ENCODE measurements at regions of chr2 and their contacts with region 1.

Region 1: DNA sequence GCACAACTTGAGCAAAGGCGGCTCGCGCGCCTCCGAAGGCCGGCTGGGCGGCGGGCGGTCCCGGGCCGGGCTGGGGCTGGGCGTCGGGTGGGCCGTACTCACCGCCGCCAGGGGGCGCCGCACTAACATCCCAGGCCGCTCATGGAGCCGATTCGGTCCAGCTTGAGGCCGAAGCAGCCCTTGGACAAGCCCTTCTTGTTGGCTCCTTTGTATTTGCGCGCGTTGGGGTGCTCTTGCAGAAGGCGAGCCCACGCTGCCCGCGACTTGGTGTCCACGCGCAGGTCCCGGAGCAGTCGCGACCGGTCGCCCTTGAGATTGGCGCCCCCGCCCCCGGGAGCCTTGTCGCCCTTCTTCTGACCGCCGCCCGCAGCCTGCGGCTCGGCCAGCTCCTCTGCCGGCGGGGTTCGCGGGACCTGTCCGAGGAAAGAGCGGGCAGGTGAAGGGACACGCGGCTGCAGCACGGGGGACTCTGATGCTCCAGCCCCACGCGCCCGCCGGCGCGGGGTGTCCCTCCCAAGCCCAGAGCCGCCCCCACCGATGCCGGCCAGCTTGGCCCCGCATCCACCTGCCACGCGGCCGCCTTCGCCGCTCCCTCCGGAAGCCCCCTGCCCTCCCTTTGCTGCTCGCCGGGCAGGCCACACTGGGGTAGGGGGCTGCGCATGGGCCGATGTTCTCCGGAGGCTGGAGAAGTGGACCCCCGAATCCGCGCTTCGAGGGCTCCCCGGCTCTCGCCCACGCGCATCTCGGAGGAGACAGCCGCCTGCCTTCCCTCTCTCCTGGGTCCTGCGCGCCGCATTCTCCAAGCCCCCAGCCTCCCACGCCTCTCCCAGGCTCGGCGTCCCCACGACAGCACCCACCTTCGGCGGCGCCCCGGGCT is 655 bp downstream of the NPPC start:
- DNase-seq: peak; percentile 60 to 88 (median 78)
- H3K4me3 ChIP-seq: peak overlapping the region; percentile 32 to 78 (median 64)
- H3K27ac ChIP-seq: peak overlapping the region in 2 of 59 donors; percentile 23 to 64
- H3K27me3 ChIP-seq: peaks cover 0 to 42% (median 16%) of the 10 kb centered on the region in 45 donors
- CTCF ChIP-seq: peak; percentile 62 to 98 (median 91)

Region 2: GRCh38 chr2:231452799-231453508 is 472.6 kb before region 1 on chr2:
- intact Hi-C with region 1: no loop called
- DNase-seq: peak in 1 of 10 donors; percentile 8
- H3K4me3 ChIP-seq: no peak overlapping the region
- H3K27ac ChIP-seq: peak overlapping the region in 30 of 59 donors; percentile 4 to 74 (median 41)
- H3K27me3 ChIP-seq: no peaks in the 10 kb centered on the region
- CTCF ChIP-seq: no peak

Region 3: DNA sequence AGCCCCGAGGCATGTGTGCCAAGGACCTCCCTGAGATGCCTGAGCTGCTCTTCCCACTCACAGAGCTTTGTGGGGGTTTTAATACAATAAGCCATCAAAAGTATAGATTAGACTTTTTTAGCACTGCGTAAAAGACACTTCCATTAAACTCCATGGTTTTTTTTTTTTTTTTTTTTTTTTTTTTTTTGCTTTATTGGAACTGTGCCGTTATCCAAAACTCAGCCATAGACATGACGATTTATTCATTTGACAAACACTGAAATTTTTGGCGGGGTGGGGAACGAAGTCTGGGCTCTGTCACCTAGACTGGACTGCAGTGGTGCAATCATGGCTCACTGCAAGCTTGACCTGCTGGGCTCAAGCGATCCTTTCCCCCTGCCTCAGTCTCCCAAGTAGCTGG is 17.8 kb before region 1 on chr2:
- intact Hi-C with region 1: loop called in 1 of 2 experiments (anchors 2 kb)
- DNase-seq: no peak
- H3K4me3 ChIP-seq: no peak overlapping the region
- H3K27ac ChIP-seq: no peak overlapping the region
- H3K27me3 ChIP-seq: no peaks in the 10 kb centered on the region
- CTCF ChIP-seq: no peak

Region 4: DNA sequence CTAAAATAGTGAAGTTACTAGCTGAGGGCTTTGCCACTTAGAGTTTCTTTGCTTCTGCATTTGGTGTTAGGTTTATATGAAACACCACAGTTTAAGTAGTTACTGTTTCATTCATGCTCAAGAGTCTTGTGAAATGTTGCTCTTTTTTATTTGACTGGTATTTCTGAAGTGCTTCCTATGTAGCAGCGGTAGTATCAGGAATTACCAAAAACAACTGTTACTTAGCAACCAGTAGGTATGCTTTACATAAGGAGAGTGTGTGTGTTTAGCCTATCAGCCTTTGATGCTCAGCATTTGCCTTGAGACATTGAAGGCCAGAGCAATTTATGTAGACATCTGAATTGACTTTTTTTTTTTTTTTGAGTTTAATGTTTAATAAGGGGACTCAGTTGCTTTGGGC is 39.6 kb after region 1 on chr2:
- intact Hi-C with region 1: no loop called
- DNase-seq: no peak
- H3K4me3 ChIP-seq: no peak overlapping the region
- H3K27ac ChIP-seq: no peak overlapping the region
- H3K27me3 ChIP-seq: no peaks in the 10 kb centered on the region
- CTCF ChIP-seq: no peak

Region 5: GRCh38 chr2:232142049-232142448 is 216.5 kb after region 1 on chr2:
- intact Hi-C with region 1: loop called (anchors 1 to 5 kb)
- DNase-seq: peak in 5 of 10 donors; percentile 14 to 59 (median 39)
- H3K4me3 ChIP-seq: no peak overlapping the region
- H3K27ac ChIP-seq: no peak overlapping the region
- H3K27me3 ChIP-seq: no peaks in the 10 kb centered on the region
- CTCF ChIP-seq: peak in 55 of 56 donors; percentile 53 to 92 (median 74)

Region 6: DNA sequence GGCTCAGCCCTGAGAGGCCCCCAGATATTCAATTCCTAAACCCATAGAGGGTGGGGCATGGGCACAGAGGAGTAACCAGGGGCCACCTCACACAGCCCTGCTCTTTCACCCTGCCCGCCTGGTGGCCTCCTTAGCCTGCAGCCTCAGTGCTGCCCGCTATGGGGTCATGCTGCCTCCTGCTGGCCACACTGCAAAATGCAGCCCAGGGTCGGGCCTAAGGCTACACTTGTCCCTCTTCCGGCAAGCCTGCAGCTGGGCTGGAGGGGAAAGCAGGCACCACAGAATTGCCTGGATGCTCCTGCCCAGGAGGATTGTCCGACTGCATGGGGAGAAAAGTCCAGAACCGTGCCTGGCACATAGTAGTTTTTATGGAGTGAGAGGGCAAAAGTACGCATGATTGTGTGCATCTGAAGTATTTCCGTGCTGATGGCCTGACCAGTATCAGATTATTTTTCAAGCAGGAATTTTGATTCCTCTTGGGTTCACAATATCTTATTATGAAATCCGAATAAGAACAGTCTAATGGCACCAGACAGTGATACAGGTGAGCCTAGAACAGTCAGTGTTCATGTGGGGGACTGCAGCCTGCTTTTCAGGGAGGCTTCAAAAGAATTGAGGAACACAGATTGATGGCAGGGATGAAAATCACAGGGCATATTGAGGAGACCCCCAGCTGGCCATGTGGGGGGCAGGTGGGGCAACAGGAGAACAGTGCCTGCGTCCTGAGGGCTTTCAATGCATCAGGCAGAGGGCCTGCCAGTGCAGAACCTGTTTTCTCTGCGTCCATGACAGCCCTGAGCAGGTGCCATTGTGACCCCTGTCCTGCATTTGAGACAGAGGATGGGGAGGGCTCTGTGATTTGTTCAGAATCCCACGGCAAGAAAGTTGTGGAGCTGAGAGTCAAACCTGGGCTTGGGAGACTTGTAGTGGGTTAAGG is 401.8 kb after region 1 on chr2:
- intact Hi-C with region 1: loop called (anchors 2 kb)
- DNase-seq: peak; percentile 30 to 86 (median 78)
- H3K4me3 ChIP-seq: no peak overlapping the region
- H3K27ac ChIP-seq: no peak overlapping the region
- H3K27me3 ChIP-seq: no peaks in the 10 kb centered on the region
- CTCF ChIP-seq: peak; percentile 47 to 95 (median 85)

Region 7: GRCh38 chr2:232444409-232445148 is 519.0 kb after region 1 on chr2:
- intact Hi-C with region 1: loop called in 1 of 2 experiments (anchors 5 kb)
- DNase-seq: peak in 3 of 10 donors; percentile 13 to 46 (median 36)
- H3K4me3 ChIP-seq: no peak overlapping the region
- H3K27ac ChIP-seq: no peak overlapping the region
- H3K27me3 ChIP-seq: no peaks in the 10 kb centered on the region
- CTCF ChIP-seq: peak in 51 of 56 donors; percentile 12 to 60 (median 42)